Mucosa of descending colon (tissue), 3 donors: ENCODE measurements at regions of chr10 and their contacts with region 1.

Region 1: GRCh38 chr10:101467286-101467770 is 113.4 kb downstream of the BTRC start:
- DNase-seq: peak in 1 of 3 donors; percentile 50
- ATAC-seq: peak; percentile 91
- H3K4me3 ChIP-seq: no peak overlapping the region
- H3K4me1 ChIP-seq: peaks cover 9% of the 10 kb centered on the region
- CTCF ChIP-seq: peak; percentile 49

Region 2: DNA sequence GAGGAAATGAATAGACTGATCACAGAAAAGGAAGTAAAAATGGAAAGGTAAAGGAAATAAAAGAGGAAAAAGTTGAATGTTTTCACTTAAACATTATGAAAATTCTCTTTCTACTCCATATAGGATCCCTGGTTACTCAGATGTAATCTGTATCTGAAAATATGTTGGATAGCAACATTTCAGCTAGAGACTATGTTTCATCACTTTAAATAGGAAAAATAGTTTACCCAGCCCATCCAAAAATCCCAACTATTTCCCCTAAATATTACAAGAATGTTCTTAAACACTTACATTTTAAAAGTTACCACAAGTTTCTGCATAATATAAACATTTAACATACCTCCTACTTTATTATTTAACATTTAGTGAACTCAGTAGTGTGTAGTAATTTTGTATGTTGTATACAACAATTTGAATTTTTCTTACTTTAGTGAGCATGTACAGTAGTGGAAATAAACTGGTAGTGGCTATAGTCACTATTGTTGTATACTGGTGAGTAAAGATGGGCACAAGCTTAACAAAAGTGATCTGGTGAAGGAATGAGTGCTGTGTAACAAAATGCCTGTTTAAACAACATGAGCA is 527.5 kb before region 1 on chr10:
- intact Hi-C with region 1: no loop called
- DNase-seq: no peak
- ATAC-seq: no peak
- H3K4me3 ChIP-seq: no peak overlapping the region
- H3K4me1 ChIP-seq: no peaks in the 10 kb centered on the region
- CTCF ChIP-seq: no peak

Region 3: DNA sequence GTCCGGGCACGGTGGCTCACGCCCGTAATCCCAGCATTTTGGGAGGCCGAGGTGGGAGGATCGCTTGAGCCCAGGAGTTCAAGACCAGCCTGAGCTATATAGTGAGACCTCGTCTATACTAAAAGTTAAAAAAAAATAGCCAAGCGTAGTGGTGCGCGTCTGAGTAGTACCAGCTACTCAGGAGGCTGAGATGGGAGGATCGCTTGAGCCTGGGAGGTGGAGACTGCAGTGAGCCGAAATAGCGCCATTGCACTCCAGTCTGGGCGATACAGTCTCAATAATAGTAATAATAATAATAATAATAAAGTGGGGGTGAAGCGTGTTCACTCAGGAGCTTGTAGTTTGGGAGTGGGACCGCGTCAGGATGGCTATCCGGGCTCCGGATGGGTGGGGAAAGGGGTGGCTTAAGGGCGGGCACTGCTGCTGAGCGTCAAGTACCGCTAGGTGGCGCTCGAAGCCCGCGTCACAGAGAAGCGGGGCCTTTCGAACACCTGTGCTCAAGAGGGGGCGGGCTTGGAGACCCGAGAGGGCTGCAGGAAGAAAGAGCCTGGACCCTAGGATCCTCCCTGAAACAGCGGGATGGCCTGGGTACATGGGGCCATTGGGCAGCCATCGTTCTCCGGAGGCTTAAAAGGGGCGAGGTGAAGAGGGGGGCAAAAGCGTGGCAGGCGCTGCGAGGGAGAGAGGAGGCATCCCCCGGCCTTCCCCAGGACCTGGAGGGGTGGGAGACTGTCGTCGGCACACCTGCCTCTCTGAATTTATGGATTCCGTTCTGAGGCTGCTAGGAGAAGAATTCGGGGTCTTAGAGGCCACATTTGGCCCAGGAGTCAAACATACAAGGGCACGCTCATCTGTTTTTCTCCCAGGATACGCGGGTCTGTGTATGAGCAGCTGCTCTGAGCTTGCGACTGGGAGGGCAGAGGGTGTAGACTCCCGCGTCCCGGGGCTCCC is 252.6 kb before region 1 on chr10:
- intact Hi-C with region 1: loop called in 1 of 2 experiments (anchors 10 kb)
- DNase-seq: peak in 2 of 3 donors; percentile 72 to 74
- ATAC-seq: peak; percentile 74
- H3K4me3 ChIP-seq: no peak overlapping the region
- H3K4me1 ChIP-seq: peaks cover 17% of the 10 kb centered on the region
- CTCF ChIP-seq: peak; percentile 73

Region 4: GRCh38 chr10:101602761-101603398 is 135.6 kb after region 1 on chr10:
- intact Hi-C with region 1: no loop called
- DNase-seq: peak in 2 of 3 donors; percentile 73 to 78
- ATAC-seq: peak; percentile 91
- H3K4me3 ChIP-seq: no peak overlapping the region
- H3K4me1 ChIP-seq: no peaks in the 10 kb centered on the region
- CTCF ChIP-seq: peak; percentile 64